Psoas muscle (tissue), 8 donors: ENCODE measurements at regions of chr9 and their contacts with region 1.

Region 1: GRCh38 chr9:8179381-8180053 is 379.9 kb upstream of the DMAC1 start:
- DNase-seq: no peak
- ATAC-seq: no peak
- H3K4me3 ChIP-seq: no peak overlapping the region
- H3K27ac ChIP-seq: no peak overlapping the region
- H3K4me1 ChIP-seq: no peaks in the 10 kb centered on the region
- H3K27me3 ChIP-seq: no peaks in the 10 kb centered on the region
- CTCF ChIP-seq: no peak

Region 2: GRCh38 chr9:8234316-8234715 is 54.8 kb after region 1 on chr9:
- intact Hi-C with region 1: loop called in 1 of 2 experiments (anchors 10 kb)
- DNase-seq: no peak
- ATAC-seq: no peak
- H3K4me3 ChIP-seq: no peak overlapping the region
- H3K27ac ChIP-seq: no peak overlapping the region
- H3K4me1 ChIP-seq: peaks cover 9% of the 10 kb centered on the region
- H3K27me3 ChIP-seq: no peaks in the 10 kb centered on the region
- CTCF ChIP-seq: no peak